K562 (cell line): ENCODE measurements at regions of chr2 and their contacts with region 1.

Region 1: DNA sequence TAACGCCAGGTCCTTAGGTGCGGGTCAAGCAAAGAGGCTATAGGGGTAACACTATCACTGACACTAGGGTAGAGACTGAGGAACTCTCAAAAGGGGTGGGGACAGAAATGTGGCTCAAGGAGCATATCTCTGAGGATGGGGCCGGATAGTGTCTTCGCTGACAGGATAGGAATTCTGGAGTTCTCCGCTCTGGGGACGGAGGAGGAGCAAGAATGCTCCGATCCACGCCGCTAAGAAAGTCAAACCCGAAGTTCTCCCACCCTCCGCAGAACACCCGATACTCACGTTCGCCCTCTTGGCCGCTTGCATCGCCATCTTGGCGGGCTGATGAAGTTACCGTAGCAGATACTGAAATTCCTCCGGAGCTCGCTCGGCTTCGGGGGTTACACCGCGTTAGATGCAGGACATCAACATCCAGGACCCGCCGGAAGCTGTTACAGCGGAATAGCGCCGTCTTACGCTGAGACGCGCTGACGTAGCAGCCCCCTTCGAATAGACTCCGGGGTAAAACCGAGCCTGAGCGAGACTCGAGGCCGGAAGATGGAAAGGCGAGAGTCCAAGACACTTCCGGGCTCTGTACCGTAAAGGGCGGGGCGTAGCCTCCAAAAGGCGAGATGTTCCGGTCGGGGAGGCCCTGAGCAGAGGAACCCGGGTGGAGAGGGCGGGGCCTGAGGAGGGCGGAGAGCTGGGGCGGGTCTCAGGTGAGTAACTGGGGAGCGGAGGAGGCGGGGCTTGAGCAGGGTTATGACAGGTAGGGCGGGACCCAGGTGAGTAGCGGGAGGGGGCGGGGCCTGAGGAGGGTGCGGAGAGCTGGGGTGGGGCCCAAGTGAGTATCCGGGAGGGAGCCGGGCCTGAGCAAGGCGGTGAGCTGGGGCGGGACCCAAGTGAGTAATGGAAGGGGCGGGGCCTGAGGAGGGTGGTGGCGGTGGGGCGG is at the start of gene SF3B6:
- DNase-seq: peak; percentile 94 to 100 (median 96)
- ATAC-seq: peak; percentile 94
- H3K4me3 ChIP-seq: peak within 1 kb of the TSS; percentile 58
- H3K27ac ChIP-seq: peak within 1 kb of the TSS; percentile 75
- H3K4me1 ChIP-seq: peaks cover 9 to 15% of the 10 kb centered on the region in 2 experiments; a peak in 4 of 5 replicates
- H3K27me3 ChIP-seq: no peaks in the 10 kb centered on the region
- CTCF ChIP-seq: peak in 1 of 3 experiments; percentile 14; a peak in 1 of 6 replicates
- EP300 ChIP-seq: peak; percentile 79
- POLR2A ChIP-seq: peak; percentile 94
- RAD21 ChIP-seq: no peak
- polyA plus RNA-seq, gene SF3B6: 535 to 591 TPM

Region 2: DNA sequence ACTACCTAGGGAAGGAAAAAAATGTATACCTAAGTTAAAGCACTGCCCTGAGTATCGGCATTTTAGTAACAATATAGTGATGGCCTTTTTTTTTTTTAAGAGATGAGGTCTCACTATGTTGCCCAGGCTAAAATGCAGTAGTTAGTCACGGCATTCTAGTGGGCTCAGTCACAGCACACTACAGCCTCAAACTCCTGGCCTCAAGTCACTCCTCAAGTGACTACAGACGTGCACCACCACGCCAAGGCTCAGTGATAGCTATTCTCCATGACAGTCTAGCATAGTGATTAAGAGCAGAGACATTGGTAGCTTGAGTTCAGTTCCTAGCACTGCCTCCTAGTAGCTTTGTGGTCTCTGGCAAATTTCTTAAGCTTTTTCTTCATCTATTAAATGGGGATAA is 108.3 kb before region 1 on chr2:
- CTCF ChIA-PET with region 1: no interaction called
- POLR2A ChIA-PET with region 1: no interaction called
- in situ Hi-C with region 1: no loop called
- intact Hi-C with region 1: no loop called
- DNase-seq: no peak
- ATAC-seq: no peak
- H3K4me3 ChIP-seq: no peak overlapping the region
- H3K27ac ChIP-seq: no peak overlapping the region
- H3K4me1 ChIP-seq: no peaks in the 10 kb centered on the region
- H3K27me3 ChIP-seq: no peaks in the 10 kb centered on the region
- CTCF ChIP-seq: no peak
- EP300 ChIP-seq: no peak
- POLR2A ChIP-seq: no peak
- RAD21 ChIP-seq: no peak

Region 3: DNA sequence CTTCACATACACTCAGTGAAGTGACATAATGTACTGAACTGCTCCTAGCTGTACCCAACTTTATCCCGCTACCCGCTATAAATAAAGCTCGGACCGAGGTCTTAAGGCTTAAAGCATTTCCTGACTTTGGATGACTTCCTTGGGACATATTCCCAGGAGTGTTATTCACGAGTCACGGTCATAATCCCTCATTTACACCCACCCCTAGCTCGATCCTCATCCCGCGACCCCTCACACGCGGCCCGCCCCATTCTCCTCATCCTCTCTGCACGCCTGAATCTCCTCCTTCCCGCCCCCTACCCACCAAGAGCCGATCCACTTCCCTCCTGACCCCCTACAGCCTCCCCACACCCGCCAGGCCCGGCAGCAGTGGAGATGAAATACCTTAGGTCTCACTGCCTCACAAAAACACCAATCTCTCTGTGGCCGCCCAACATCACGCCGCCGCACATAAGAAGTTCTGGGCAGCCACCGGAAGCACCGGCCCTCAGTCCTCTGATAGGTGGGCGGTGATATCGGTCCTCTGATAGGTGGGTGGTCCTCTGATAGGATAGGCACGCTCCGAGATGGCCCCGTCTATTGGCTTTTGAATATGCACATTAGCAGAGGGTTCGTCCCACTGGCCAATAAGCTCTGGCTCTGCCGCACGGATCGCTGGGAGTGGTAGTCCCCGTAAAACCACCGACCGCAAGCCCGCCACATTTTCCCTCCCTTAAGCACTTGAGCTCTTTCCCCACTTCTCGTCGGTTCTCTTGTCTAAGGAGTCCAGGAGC is 29.1 kb before region 1 on chr2 and contains the start of gene WDCP:
- CTCF ChIA-PET with region 1: no interaction called
- POLR2A ChIA-PET with region 1: interaction called, 10 read pairs
- in situ Hi-C with region 1: no loop called
- intact Hi-C with region 1: loop called (anchors 1 kb)
- DNase-seq: peak; percentile 90 to 98 (median 94)
- ATAC-seq: peak; percentile 96
- H3K4me3 ChIP-seq: peak within 1 kb of the TSS; percentile 64
- H3K27ac ChIP-seq: peak within 1 kb of the TSS; percentile 52
- H3K4me1 ChIP-seq: peaks cover 8 to 22% of the 10 kb centered on the region in 2 experiments; a peak in 4 of 5 replicates
- H3K27me3 ChIP-seq: peaks cover 6 to 11% of the 10 kb centered on the region in 2 experiments; a peak in 3 of 5 replicates
- CTCF ChIP-seq: no peak
- EP300 ChIP-seq: 0 out of 2 replicates have a peak, but pooled peaks have one; percentile 14
- POLR2A ChIP-seq: peak; percentile 96
- RAD21 ChIP-seq: no peak
- polyA plus RNA-seq, gene WDCP: 11.9 to 25.1 TPM

Region 4: DNA sequence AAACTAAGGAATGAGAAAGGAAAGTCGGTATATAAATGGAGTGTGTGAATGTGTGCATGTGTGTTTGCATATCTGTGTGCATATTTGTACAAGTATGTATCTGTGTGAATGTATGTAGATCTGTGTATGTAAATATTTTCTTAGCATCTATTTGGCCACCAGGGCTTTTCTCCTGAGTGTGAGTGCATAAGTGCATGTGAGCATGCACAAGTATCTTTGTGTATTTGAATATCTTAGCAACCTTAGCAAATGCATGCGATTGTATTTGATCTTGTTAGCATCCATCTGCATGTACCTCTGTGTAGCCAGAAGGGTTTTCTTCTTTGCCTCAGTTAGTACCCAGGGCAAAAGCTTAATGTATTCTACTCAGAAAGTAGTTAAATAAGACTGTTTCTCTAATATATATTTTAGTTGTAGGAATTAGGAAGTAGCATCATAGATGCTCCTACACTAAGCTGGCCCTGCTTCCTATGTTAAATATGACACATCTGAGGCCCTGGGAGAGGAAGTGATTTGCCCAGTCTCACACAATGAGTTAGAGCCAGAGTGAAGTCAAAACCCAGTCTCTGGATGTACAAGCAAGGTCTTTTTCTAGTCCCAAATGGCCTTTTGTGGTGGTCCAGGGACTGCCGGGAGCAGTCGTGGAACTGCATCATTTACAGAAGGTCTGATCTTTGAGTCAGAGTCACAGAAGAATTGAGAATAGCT is 17.5 kb before region 1 on chr2:
- CTCF ChIA-PET with region 1: no interaction called
- POLR2A ChIA-PET with region 1: interaction called, 11 read pairs
- in situ Hi-C with region 1: no loop called
- intact Hi-C with region 1: no loop called
- DNase-seq: no peak
- ATAC-seq: no peak
- H3K4me3 ChIP-seq: no peak overlapping the region
- H3K27ac ChIP-seq: no peak overlapping the region
- H3K4me1 ChIP-seq: no peaks in the 10 kb centered on the region
- H3K27me3 ChIP-seq: no peaks in the 10 kb centered on the region
- CTCF ChIP-seq: no peak
- EP300 ChIP-seq: no peak
- POLR2A ChIP-seq: no peak
- RAD21 ChIP-seq: no peak

Region 5: GRCh38 chr2:24065341-24065740 is 10.8 kb before region 1 on chr2:
- CTCF ChIA-PET with region 1: no interaction called
- POLR2A ChIA-PET with region 1: interaction called, 16 read pairs
- in situ Hi-C with region 1: no loop called
- intact Hi-C with region 1: no loop called
- DNase-seq: no peak
- ATAC-seq: no peak
- H3K4me3 ChIP-seq: no peak overlapping the region
- H3K27ac ChIP-seq: no peak overlapping the region
- H3K4me1 ChIP-seq: no peaks in the 10 kb centered on the region
- H3K27me3 ChIP-seq: no peaks in the 10 kb centered on the region
- CTCF ChIP-seq: no peak
- EP300 ChIP-seq: no peak
- POLR2A ChIP-seq: no peak
- RAD21 ChIP-seq: no peak

Region 6: GRCh38 chr2:24164125-24164973 is 88.2 kb after region 1 on chr2:
- CTCF ChIA-PET with region 1: no interaction called
- POLR2A ChIA-PET with region 1: no interaction called
- in situ Hi-C with region 1: no loop called
- intact Hi-C with region 1: loop called (anchors 2 kb)
- DNase-seq: peak; percentile 58 to 78 (median 69)
- ATAC-seq: peak; percentile 97
- H3K4me3 ChIP-seq: no peak overlapping the region
- H3K27ac ChIP-seq: no peak overlapping the region
- H3K4me1 ChIP-seq: peaks cover 0 to 4% of the 10 kb centered on the region in 2 experiments; a peak in 1 of 5 replicates
- H3K27me3 ChIP-seq: peaks cover 2 to 16% of the 10 kb centered on the region in 2 experiments; a peak in 1 of 5 replicates
- CTCF ChIP-seq: peak; percentile 98 to 99 (median 99)
- EP300 ChIP-seq: no peak; the same call in 1 of the 2 replicates
- POLR2A ChIP-seq: no peak
- RAD21 ChIP-seq: peak; percentile 72 to 91